Left ventricle myocardium superior (tissue), 1 donor: ENCODE measurements at regions of chr16 and their contacts with region 1.

Region 1: GRCh38 chr16:68328151-68328859 is 17.5 kb downstream of the PRMT7 start:
- DNase-seq: peak; percentile 78
- ATAC-seq: peak; percentile 91

Region 2: GRCh38 chr16:68244903-68245853 is 83.1 kb before region 1 on chr16 and contains the start of gene PLA2G15:
- intact Hi-C with region 1: loop called (anchors 5 kb)
- DNase-seq: peak; percentile 99
- ATAC-seq: peak; percentile 94
- total RNA-seq, gene PLA2G15: 33.8 TPM

Region 3: DNA sequence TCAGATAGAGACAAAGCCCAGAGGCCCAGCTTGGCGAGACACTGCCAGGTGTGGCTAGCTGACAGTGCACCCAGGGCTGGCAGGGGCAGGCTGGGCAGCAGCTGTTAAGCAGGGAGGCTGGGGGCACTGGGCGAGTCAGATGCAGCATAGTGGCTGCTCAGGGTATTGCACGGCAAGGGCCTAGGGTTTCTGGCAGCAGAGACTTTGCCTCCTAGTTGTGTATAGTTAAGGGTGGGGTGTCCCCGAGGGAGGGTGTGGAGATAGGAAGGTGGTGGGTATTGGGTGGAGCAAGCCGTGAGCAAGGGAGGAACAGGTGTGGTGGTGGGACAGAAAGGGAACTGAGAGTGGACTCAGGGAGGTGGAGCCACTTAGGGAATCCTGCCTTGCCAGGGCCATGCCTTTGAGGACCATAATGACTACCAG is 54.0 kb after region 1 on chr16:
- intact Hi-C with region 1: no loop called
- DNase-seq: no peak
- ATAC-seq: no peak